Calu3 (cell line): ENCODE measurements at regions of chr7 and their contacts with region 1.

Region 1: GRCh38 chr7:143240291-143241168 is 18.7 kb downstream of the TAS2R40 start:
- DNase-seq: peak; percentile 69
- H3K4me3 Mint-ChIP-seq: no peak overlapping the region
- H3K27ac Mint-ChIP-seq: no peak overlapping the region
- H3K4me1 Mint-ChIP-seq: peaks cover 20% of the 10 kb centered on the region
- H3K27me3 Mint-ChIP-seq: peaks cover 21% of the 10 kb centered on the region
- CTCF ChIP-seq: peak; percentile 63

Region 2: DNA sequence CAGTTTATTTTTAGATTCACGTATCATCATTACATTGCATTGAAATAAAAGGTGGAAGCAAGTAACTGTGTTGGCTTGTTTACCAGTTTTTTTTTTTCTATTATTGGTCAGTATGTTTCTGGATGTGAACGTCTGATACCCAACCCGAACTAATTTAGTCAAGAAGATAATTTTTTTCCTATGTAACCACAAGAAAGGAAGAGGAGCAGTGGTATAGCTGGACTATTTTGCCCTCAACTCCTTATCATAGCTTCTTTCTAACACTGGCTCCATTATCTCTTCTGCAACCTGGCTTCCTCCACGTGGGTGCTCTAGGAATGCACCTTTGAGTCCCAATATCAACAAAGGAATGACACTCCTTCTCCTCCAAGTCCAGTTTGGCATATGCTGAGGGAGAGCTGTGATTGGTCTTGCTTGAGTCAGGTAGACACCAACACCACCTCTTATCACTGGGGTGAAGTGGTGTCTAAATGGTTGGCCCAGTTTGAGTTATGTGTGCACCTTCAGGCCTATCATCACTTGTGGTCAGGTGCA is 243.0 kb before region 1 on chr7:
- CTCF ChIA-PET with region 1: no interaction called
- intact Hi-C with region 1: no loop called
- DNase-seq: no peak
- H3K4me3 Mint-ChIP-seq: no peak overlapping the region
- H3K27ac Mint-ChIP-seq: no peak overlapping the region
- H3K4me1 Mint-ChIP-seq: no peaks in the 10 kb centered on the region
- H3K27me3 Mint-ChIP-seq: no peaks in the 10 kb centered on the region
- CTCF ChIP-seq: no peak

Region 3: DNA sequence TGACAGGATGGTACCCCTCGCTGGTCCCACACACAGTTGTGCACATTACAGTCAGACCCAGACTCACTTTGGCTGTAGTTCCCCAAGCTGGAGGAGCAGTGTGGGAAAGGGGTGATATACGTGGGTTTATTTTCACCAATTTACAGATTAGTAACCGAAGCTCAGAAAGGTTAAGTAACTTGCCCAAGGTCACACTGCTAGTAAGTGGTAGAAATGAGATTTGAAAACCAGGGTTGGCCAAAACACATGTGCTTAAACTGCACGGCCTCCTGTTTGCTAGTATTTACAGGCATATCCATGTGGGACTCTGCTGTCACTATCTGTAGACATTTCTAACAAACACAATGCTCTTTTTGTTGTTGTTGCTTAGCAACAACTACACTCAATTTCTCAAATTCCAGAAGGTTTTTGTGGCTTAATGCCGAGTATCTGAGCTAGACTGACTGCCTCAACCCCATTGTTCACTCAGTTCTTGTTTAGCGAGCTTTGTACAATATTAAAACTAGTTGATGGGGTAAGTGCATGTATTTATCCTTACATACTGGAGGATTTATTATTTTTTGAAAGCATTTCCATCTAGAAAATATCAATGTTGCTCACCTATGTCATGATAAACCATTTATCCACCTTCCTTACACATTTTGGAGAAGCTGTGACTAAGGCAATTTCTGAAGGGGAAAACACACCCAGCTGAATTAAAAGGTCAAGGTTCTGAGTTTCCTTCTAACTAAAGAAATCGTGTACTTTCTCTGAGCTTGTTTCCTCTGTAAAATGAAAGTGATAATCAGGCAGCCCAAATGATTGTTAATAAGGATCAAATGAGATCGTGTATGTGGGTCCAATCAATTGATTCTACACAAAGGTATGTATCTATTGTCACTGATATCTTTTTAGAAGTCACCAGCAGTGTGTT is 38.9 kb after region 1 on chr7:
- CTCF ChIA-PET with region 1: interaction called, 10 read pairs
- intact Hi-C with region 1: no loop called
- DNase-seq: peak; percentile 48
- H3K4me3 Mint-ChIP-seq: peak overlapping the region; percentile 37
- H3K27ac Mint-ChIP-seq: peak overlapping the region; percentile 90
- H3K4me1 Mint-ChIP-seq: peaks cover 37% of the 10 kb centered on the region
- H3K27me3 Mint-ChIP-seq: no peaks in the 10 kb centered on the region
- CTCF ChIP-seq: no peak

Region 4: GRCh38 chr7:143305423-143306070 is 65.0 kb after region 1 on chr7:
- CTCF ChIA-PET with region 1: interaction called, 16 read pairs
- intact Hi-C with region 1: loop called (anchors 1 kb)
- DNase-seq: peak; percentile 80
- H3K4me3 Mint-ChIP-seq: no peak overlapping the region
- H3K27ac Mint-ChIP-seq: no peak overlapping the region
- H3K4me1 Mint-ChIP-seq: peaks cover 10% of the 10 kb centered on the region
- H3K27me3 Mint-ChIP-seq: no peaks in the 10 kb centered on the region
- CTCF ChIP-seq: peak; percentile 77

Region 5: DNA sequence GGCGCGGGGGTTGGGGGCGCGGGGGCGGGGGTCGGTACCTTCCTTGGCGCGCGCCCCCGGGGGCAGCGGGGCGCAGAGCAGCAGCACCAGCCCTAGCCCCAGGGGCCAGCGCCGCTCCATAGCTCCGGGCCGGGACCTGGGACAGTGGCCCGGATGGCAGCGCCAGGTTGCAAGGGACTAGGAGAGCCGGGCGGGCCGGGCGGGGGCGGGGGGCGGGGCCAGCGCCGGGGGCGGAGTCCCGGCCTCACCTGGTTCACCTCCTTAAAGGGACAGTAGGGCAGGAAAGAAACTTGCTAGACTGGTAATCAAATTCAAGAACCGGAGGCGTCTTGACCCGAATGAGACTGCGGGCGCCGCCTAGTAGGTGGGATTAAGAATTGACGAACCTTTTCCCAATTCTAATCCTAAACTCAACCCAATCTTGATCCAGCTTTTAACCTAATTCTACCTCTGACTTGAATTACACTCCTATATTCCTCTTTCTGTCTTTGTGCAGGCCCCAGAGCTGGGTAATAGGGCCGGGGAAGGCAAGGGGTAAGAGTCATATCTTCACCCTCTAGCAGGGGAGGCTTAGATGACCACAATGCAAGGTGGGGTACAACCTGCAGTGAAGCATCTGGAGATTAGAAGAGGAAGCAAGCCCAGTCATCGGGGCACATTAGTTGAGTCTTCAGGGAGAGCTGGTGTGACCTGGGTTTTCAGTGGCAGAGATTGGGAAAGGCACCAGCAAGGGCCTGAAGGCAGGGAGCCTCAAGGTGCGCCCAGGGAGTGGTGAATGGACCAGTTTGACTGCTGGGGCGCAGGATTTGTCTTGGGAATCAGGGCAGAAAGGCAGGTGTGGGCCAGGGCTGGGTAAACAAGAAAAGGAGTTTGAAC is 168.4 kb after region 1 on chr7 and contains the start of gene EPHA1:
- CTCF ChIA-PET with region 1: no interaction called
- intact Hi-C with region 1: loop called (anchors 2 kb)
- DNase-seq: peak; percentile 81
- H3K4me3 Mint-ChIP-seq: peak within 1 kb of the TSS; percentile 88
- H3K27ac Mint-ChIP-seq: peak within 1 kb of the TSS; percentile 81
- H3K4me1 Mint-ChIP-seq: peaks cover 20% of the 10 kb centered on the region
- H3K27me3 Mint-ChIP-seq: no peaks in the 10 kb centered on the region
- CTCF ChIP-seq: peak; percentile 73
- total RNA-seq, gene EPHA1: 21.6 and 23.6 TPM in 2 replicates

Region 6: DNA sequence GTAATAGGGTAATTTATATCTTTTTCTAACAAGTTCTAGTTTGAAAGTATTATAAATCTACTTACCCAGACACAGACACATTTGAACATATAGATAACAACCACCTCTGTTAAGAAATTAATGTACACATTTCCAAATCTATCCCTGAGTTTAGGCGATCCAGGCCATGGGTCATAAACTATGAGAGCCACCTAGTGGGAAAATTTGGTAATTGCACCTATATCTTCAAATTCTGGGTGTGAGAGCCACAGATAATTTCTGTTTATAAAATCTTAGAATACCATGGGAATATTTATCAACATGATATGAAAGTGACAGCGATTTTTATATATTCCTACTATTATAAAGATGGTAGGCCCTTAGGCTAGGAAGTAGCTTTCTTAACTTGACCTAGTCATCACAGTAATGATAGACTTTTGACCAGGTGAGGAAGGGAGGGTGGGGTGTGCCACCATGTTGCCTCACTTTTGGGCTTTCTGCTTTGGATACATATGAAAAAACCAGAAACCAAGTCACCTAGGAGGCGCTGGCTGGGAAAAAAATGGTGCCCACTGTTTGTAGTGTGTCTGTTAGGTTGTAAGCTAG is 176.1 kb after region 1 on chr7:
- CTCF ChIA-PET with region 1: interaction called, 5 read pairs
- intact Hi-C with region 1: loop called (anchors 1 kb)
- DNase-seq: peak; percentile 41
- H3K4me3 Mint-ChIP-seq: no peak overlapping the region
- H3K27ac Mint-ChIP-seq: no peak overlapping the region
- H3K4me1 Mint-ChIP-seq: peaks cover 39% of the 10 kb centered on the region
- H3K27me3 Mint-ChIP-seq: no peaks in the 10 kb centered on the region
- CTCF ChIP-seq: peak; percentile 70

Region 7: DNA sequence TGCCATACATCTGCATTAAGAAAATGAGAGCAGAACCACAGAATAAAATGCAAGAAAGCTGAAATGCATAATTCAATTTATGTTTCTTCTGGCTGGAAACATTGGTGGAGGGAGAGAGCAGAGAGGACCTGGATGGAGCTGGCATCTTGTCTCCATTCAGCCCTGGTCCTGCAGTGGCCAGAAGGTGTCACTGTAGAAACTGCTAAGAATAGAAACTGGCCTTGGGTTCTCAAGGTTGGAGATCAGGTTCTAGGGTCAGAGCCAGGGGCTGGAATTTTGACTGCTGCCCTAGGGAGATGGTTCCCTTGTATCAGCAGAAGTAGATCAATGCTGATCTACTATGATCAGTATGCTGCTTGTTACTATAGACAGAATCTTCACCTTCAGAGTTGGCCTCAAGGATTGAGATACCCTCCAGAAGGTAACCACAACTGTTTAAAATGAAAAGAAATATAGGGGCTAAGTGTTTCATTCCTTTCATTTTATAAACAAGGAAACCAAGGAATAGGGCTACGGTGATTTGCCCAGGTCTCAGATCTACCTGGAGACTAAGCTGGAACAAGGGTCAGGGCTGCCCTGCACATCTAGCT is 250.3 kb after region 1 on chr7:
- CTCF ChIA-PET with region 1: no interaction called
- intact Hi-C with region 1: loop called (anchors 10 kb)
- DNase-seq: peak; percentile 9
- H3K4me3 Mint-ChIP-seq: no peak overlapping the region
- H3K27ac Mint-ChIP-seq: no peak overlapping the region
- H3K4me1 Mint-ChIP-seq: peaks cover 10% of the 10 kb centered on the region
- H3K27me3 Mint-ChIP-seq: no peaks in the 10 kb centered on the region
- CTCF ChIP-seq: peak; percentile 29